ENCODE measurements at regions of chr12 and their contacts with region 1.

Region 1: GRCh38 chr12:29282031-29282816 is 98.7 kb downstream of the ERGIC2 start:
- DNase-seq: no peak
- H3K4me3 ChIP-seq: no peak overlapping the region
- H3K27ac ChIP-seq: no peak overlapping the region
- H3K4me1 ChIP-seq: peaks cover 0 to 4% (median 0%) of the 10 kb centered on the region in 4 donors
- H3K27me3 ChIP-seq: no peaks in the 10 kb centered on the region
- CTCF ChIP-seq: no peak
- EP300 ChIP-seq: no peak
- POLR2A ChIP-seq: no peak

Region 2: GRCh38 chr12:28237423-28237822 is 1044.8 kb before region 1 on chr12:
- in situ Hi-C with region 1: no loop called
- intact Hi-C with region 1: loop called (anchors 10 kb)
- DNase-seq: no peak
- H3K4me3 ChIP-seq: no peak overlapping the region
- H3K27ac ChIP-seq: no peak overlapping the region
- H3K4me1 ChIP-seq: peaks cover 0 to under 1% (median 0%) of the 10 kb centered on the region in 4 donors
- H3K27me3 ChIP-seq: no peaks in the 10 kb centered on the region
- CTCF ChIP-seq: no peak
- EP300 ChIP-seq: no peak
- POLR2A ChIP-seq: no peak